Endothelial cell of umbilical vein (primary cell): ENCODE measurements at regions of chr1 and their contacts with region 1.

Region 1: GRCh38 chr1:97820470-97821188 is 100.2 kb downstream of the DPYD start:
- DNase-seq: peak; percentile 62
- H3K4me3 ChIP-seq: no peak overlapping the region
- H3K27ac ChIP-seq: no peak overlapping the region
- H3K4me1 ChIP-seq: no peaks in the 10 kb centered on the region
- H3K27me3 ChIP-seq: no peaks in the 10 kb centered on the region
- CTCF ChIP-seq: peak; percentile 21 to 29
- POLR2A ChIP-seq: no peak

Region 2: DNA sequence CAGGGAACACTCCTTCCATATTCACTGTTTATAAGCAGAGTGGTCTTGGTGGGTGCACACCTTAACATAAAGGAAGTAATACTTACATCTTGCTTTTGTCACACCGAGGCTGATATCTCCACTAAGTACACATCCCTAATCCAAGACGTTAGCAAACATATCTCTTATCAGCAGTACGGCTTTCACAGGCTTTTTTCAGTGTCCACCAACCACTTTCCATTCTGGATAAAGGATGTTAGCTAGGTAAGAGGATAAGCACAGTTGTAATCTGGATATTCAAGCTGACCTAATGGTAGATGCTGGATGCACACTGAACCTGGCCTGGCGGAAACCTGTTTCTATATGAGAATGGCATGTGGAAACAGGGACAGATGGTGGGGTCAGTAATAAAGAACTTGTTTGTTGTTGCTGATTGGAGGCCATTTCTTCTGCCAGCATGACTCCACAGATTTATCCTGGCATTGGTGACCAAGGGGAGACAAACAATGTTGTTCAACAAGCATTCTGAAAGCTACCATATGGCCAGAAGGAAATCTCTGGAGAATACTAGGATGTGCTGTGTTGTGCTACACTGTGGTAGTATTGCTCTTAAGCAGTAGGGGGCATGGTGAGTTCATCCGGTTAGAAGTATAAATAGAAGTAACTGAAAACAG is 682.6 kb before region 1 on chr1:
- CTCF ChIA-PET with region 1: interaction called, 3 read pairs
- POLR2A ChIA-PET with region 1: no interaction called
- dilution Hi-C with region 1: no loop called
- intact Hi-C with region 1: loop called (anchors 5 kb)
- DNase-seq: peak; percentile 95
- H3K4me3 ChIP-seq: no peak overlapping the region
- H3K27ac ChIP-seq: peak overlapping the region; percentile 27
- H3K4me1 ChIP-seq: peaks cover 10% of the 10 kb centered on the region
- H3K27me3 ChIP-seq: no peaks in the 10 kb centered on the region
- CTCF ChIP-seq: peak; percentile 52 to 65
- POLR2A ChIP-seq: no peak

Region 3: GRCh38 chr1:97192872-97193572 is 627.6 kb before region 1 on chr1:
- CTCF ChIA-PET with region 1: no interaction called
- POLR2A ChIA-PET with region 1: no interaction called
- dilution Hi-C with region 1: no loop called
- intact Hi-C with region 1: loop called (anchors 2 kb)
- DNase-seq: peak; percentile 97
- H3K4me3 ChIP-seq: peak overlapping the region in 1 of 3 experiments; percentile 15
- H3K27ac ChIP-seq: peak overlapping the region; percentile 73
- H3K4me1 ChIP-seq: peaks cover 15% of the 10 kb centered on the region
- H3K27me3 ChIP-seq: no peaks in the 10 kb centered on the region
- CTCF ChIP-seq: no peak
- POLR2A ChIP-seq: no peak

Region 4: DNA sequence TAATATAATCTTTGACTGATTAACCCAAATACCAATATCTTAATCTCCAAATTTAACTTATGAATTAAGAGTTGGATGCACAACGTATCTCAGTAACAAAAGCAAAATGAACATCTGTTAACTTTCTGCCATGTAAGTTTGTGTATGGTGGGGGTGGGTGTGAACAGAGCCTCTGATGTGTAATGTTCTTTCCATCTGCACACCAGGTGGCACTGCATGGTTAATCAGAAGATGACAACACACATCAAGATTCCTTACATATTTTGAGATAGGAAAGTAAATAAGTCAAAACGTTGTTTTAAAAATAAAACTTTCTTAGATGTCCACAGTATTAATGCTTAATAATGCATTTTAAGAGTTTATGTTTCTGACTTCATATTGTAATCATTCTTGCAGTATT is 151.7 kb before region 1 on chr1:
- CTCF ChIA-PET with region 1: no interaction called
- POLR2A ChIA-PET with region 1: no interaction called
- dilution Hi-C with region 1: no loop called
- intact Hi-C with region 1: loop called (anchors 1 kb)
- DNase-seq: peak; percentile 66
- H3K4me3 ChIP-seq: no peak overlapping the region
- H3K27ac ChIP-seq: no peak overlapping the region
- H3K4me1 ChIP-seq: no peaks in the 10 kb centered on the region
- H3K27me3 ChIP-seq: no peaks in the 10 kb centered on the region
- CTCF ChIP-seq: peak; percentile 23
- POLR2A ChIP-seq: no peak